Endothelial cell of umbilical vein (primary cell): ENCODE measurements at regions of chr19 and their contacts with region 1.

Region 1: GRCh38 chr19:19170053-19170872 is at the start of gene MEF2B:
- DNase-seq: peak; percentile 58
- H3K4me3 ChIP-seq: no peak within 1 kb of the TSS
- H3K27ac ChIP-seq: no peak within 1 kb of the TSS
- H3K4me1 ChIP-seq: peaks cover 5% of the 10 kb centered on the region
- H3K27me3 ChIP-seq: no peaks in the 10 kb centered on the region
- CTCF ChIP-seq: no peak
- POLR2A ChIP-seq: no peak
- total RNA-seq, gene MEF2B: 1.2 and 1.3 TPM in 2 replicates

Region 2: DNA sequence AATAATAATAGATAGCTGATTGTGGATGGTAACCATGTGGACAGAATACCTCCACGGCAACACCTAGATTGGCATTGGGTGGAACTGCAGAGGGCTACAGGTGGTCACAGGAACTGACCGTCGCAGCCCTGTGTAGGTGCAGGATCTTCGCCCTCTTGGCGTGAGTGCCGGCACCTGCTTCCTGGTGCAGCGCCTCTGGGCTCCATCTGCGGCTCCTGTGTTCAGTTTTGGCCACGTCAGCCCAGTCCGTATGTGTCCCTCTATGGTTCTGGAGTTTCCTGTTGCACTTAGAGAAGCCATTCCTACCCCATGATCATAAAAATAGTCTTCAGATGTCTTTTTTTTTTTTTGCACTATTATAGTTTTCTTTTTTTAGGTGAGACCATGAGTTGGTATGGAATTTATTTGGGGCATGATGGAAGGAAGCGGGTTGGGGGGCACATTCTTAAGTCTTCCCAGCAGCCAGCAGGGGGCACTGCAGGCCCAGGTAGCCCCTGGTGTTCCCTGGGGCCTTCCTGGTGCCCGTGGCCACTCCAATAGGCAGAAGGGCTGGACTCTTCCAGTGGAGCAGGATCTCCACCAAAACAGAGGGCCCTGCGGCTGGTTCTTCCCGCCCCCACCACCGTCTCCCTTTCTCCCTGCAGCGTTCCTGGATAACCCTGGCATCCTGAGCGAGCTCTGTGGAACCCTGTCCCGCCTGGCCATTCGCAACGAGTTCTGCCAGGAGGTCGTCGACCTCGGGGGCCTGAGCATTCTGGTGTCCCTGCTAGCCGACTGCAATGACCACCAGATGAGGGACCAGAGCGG is 116.6 kb before region 1 on chr19:
- CTCF ChIA-PET with region 1: interaction called, 12 read pairs
- POLR2A ChIA-PET with region 1: no interaction called
- dilution Hi-C with region 1: no loop called
- intact Hi-C with region 1: loop called (anchors 1 kb)
- DNase-seq: peak; percentile 53
- H3K4me3 ChIP-seq: no peak overlapping the region
- H3K27ac ChIP-seq: no peak overlapping the region
- H3K4me1 ChIP-seq: no peaks in the 10 kb centered on the region
- H3K27me3 ChIP-seq: no peaks in the 10 kb centered on the region
- CTCF ChIP-seq: peak; percentile 74 to 85
- POLR2A ChIP-seq: no peak

Region 3: DNA sequence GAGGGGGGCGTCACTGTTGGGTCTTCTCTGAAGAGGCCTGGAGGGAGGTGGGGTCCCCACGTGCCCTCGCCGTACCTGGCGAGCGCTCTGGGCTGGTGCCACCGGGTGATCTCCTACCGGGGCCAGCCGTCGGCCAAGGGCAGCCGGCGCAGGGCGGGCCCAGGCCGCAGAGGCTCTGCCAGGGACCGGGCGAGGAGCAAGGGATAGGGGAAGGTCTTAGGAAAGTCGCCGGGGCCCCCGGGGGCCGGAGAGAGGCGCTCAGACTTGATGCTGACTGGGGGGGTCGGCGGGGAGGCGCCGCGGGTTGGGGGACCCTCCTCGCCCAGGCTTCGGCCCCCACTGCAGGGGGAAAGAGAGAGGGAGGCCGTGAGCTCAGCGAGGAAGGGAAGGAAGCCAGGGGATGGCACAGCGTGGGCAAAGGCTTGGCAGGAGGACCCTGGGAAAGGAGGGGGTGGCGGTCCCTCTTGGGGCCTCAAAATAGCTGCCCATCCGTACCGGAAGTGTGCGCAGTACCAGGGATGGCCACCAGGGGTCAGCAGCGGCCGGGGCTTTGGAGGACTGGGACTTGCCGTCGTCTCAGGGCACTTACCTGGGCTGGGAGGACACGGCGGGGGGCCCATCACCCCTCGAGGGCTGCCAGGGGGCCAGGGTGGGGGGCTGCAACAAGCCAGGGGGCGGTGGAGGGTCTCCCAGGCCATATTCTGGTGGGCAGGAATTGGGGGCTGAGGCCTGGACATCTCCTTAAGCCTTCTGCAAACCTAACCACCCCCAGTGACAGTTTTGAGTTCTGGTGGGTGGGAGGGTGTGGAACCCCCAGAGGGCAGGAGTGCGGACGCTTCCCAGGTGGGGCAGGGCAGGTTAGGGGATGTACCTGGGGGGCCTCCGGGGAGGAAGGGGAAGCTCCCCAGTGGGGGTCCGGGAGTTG is 24.3 kb before region 1 on chr19:
- CTCF ChIA-PET with region 1: interaction called, 16 read pairs
- POLR2A ChIA-PET with region 1: no interaction called
- dilution Hi-C with region 1: no loop called
- intact Hi-C with region 1: loop called (anchors 1 kb)
- DNase-seq: peak; percentile 59
- H3K4me3 ChIP-seq: no peak overlapping the region
- H3K27ac ChIP-seq: no peak overlapping the region
- H3K4me1 ChIP-seq: no peaks in the 10 kb centered on the region
- H3K27me3 ChIP-seq: no peaks in the 10 kb centered on the region
- CTCF ChIP-seq: peak; percentile 80 to 97
- POLR2A ChIP-seq: no peak

Region 4: DNA sequence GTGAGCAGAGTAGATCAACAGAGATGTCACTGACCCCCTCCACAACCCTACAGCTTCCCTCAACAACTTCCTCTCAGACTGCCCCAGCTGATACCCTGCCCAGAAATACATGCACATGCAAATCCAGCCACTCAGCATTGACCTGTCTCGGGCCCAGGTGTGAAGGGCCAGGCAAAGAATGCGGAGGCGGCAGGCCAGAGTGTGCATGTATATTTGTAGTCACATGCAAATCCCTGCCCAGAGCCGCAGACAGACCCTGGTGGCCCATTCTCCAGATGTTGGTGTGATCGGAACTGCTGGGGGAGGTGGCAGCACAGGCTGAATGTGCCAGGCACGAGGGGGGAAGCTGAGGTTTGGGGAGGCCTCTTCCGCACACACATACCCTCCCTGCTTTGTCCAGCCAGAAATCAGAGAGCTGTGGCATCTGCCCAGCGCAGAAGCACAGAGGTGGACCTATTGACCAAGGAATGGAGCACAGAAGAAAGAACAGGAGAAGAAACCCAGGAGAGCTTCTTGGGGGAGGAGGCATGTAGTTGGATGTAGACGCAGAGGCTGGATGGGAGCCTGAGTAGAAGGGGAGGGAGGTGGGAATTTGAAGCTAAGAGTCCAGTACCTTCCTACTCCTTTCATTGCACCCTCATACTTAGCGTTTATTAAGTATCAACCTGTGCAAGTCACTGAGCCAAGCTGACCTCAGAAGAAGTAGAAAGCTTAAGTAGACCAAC is 14.6 kb before region 1 on chr19:
- CTCF ChIA-PET with region 1: interaction called, 31 read pairs
- POLR2A ChIA-PET with region 1: no interaction called
- dilution Hi-C with region 1: no loop called
- intact Hi-C with region 1: no loop called
- DNase-seq: no peak
- H3K4me3 ChIP-seq: no peak overlapping the region
- H3K27ac ChIP-seq: no peak overlapping the region
- H3K4me1 ChIP-seq: no peaks in the 10 kb centered on the region
- H3K27me3 ChIP-seq: no peaks in the 10 kb centered on the region
- CTCF ChIP-seq: no peak
- POLR2A ChIP-seq: no peak